Transverse colon (tissue), 4 donors: ENCODE measurements at regions of chr1 and their contacts with region 1.

Region 1: GRCh38 chr1:197775282-197776262 is at the start of gene DENND1B:
- DNase-seq: peak; percentile 91
- H3K4me3 ChIP-seq: peak within 1 kb of the TSS; percentile 62 to 89 (median 70)
- H3K27ac ChIP-seq: peak within 1 kb of the TSS; percentile 93 to 98 (median 95)
- H3K4me1 ChIP-seq: peaks cover 15 to 71% (median 43%) of the 10 kb centered on the region in 4 donors
- H3K27me3 ChIP-seq: no peaks in the 10 kb centered on the region
- CTCF ChIP-seq: peak; percentile 15 to 46 (median 23)
- EP300 ChIP-seq: no peak
- POLR2A ChIP-seq: peak; percentile 81
- total RNA-seq, gene DENND1B: 21.9 to 59.9 (median 42.3) TPM

Region 2: DNA sequence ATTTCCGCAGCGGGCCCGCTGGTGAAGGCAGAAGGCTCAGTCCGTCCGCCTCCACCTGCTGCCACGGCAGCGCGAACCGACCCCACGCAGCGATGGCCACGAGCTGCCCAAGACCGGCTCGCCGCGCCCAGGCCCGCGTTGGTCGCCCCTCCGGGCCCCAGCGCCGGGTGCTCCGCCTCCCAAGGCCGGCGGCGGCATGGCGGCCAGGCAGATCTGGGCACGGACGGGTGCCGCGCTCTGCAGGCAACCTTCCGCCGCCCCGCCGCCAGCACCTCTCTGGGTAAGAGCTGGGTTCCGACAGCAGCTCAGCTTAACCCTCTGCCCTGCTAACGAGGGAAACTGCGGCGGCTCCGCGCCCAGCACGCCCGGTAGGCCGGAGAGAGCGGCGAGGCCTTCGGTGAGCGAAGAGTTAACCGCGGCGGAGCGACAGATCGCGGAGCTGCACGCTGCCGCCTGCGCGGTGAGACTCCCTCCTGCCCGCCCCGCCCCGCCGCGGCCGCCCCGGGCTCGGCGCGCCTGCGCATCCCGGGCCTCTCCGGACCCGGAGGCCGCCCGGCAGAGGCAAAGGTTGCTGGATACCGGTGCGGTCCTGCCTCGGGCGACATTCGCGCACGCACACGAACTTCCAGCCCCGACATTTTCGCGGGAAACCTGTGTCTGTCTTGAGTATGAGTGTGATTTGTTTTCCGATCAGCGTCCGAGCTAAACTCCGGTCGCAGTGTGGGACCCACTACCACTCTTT is 127.1 kb after region 1 on chr1 and contains the start of gene C1orf53:
- in situ Hi-C with region 1: no loop called
- intact Hi-C with region 1: loop called (anchors 1 kb)
- DNase-seq: peak; percentile 91
- H3K4me3 ChIP-seq: peak within 1 kb of the TSS; percentile 51 to 69 (median 60)
- H3K27ac ChIP-seq: peak within 1 kb of the TSS; percentile 82 to 91 (median 87)
- H3K4me1 ChIP-seq: peaks cover 0 to 13% (median 5%) of the 10 kb centered on the region in 4 donors
- H3K27me3 ChIP-seq: peaks cover 55% of the 10 kb centered on the region
- CTCF ChIP-seq: peak in 1 of 5 experiments; percentile 25
- EP300 ChIP-seq: no peak
- POLR2A ChIP-seq: peak; percentile 47
- total RNA-seq, gene C1orf53: 2.5 to 7.0 TPM in 2 of 4 donors, not detected in the others